ENCODE measurements at regions of chr14 and their contacts with region 1.

Region 1: GRCh38 chr14:91356181-91356763 is 61.3 kb downstream of the CCDC88C start:
- DNase-seq: peak; percentile 87
- H3K4me3 ChIP-seq: peak overlapping the region; percentile 67
- H3K27ac ChIP-seq: peak overlapping the region; percentile 94
- H3K4me1 ChIP-seq: peaks cover 100% of the 10 kb centered on the region
- CTCF ChIP-seq: no peak

Region 2: DNA sequence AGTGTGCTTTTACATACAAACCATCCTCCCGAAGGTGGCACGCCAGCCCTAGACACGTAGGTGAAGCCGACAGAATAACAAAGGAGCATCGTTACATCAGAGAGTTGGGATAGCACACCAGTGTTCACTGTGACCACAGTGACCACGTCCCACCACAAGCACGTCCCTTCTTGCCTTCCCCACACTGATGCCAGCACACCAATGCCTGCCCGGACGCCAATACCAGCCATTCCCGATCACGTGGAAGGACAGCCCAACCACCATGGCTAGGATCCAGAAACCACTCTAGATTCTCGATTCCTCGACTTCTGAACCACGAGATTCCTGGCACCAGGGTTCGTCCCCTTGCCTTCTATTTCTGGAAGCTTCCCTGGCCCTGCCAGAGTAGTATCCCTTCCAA is 63.8 kb before region 1 on chr14:
- CTCF ChIA-PET with region 1: no interaction called
- POLR2A ChIA-PET with region 1: no interaction called
- intact Hi-C with region 1: no loop called
- DNase-seq: no peak
- H3K4me3 ChIP-seq: no peak overlapping the region
- H3K27ac ChIP-seq: no peak overlapping the region
- H3K4me1 ChIP-seq: no peaks in the 10 kb centered on the region
- CTCF ChIP-seq: no peak

Region 3: GRCh38 chr14:91323671-91324605 is 32.3 kb before region 1 on chr14:
- CTCF ChIA-PET with region 1: interaction called, 6 read pairs
- POLR2A ChIA-PET with region 1: interaction called, 13 read pairs
- intact Hi-C with region 1: loop called (anchors 1 kb)
- DNase-seq: peak; percentile 88
- H3K4me3 ChIP-seq: peak overlapping the region; percentile 53
- H3K27ac ChIP-seq: peak overlapping the region; percentile 92
- H3K4me1 ChIP-seq: peaks cover 58% of the 10 kb centered on the region
- CTCF ChIP-seq: peak; percentile 100

Region 4: DNA sequence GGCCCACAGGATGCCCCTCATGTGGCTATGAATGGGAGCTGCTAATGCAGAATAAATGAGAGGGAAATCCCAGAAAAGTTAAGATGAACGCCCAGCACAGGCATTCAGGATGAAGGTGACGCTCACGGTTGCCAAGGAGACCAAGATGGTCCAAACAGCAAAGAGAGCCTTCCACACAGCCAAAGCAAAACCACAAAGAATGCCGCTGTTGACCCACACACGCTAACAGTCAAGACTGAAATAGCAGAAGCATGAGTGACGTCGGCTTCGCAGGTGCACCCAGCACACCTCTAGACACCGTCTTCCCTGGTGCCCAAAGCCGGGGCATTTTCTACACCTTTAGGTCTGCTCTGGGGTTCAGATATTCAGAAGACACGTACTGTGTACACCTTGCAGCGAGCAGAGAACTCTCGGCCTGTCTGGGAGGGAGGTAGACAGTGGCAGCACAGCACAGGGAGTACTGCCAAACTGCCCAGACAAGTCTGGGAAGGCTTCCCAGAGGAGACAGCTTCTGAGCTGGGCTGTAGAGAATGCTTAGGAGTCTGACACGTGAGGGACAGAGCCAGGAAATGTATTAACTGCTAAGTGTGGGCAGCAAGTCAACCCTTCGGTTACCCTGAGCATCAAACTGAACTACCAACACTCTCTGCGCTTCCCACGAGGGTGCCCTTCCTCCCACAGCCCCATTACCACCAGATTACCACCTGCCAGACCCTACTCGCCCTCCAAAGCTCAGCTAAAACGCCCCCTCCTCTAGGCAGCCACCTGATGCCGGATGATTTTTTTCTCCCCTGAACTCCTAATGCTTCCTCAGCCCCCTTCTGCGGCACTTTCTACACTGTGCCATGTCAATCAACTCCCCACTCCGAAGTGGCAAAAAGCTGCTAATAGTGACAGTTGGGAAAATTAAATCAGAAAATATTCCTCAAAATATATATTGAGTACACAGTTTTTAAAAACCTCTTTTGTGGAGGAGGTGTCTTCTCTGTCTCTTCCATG is 11.2 kb after region 1 on chr14:
- CTCF ChIA-PET with region 1: interaction called, 16 read pairs
- POLR2A ChIA-PET with region 1: interaction called, 311 read pairs
- intact Hi-C with region 1: loop called (anchors 1 kb)
- DNase-seq: peak; percentile 94
- H3K4me3 ChIP-seq: peak overlapping the region; percentile 53
- H3K27ac ChIP-seq: peak overlapping the region; percentile 94
- H3K4me1 ChIP-seq: peaks cover 100% of the 10 kb centered on the region
- CTCF ChIP-seq: no peak

Region 5: GRCh38 chr14:91388551-91388975 is 32.3 kb after region 1 on chr14:
- CTCF ChIA-PET with region 1: interaction called, 3 read pairs
- POLR2A ChIA-PET with region 1: interaction called, 15 read pairs
- intact Hi-C with region 1: no loop called
- DNase-seq: no peak
- H3K4me3 ChIP-seq: no peak overlapping the region
- H3K27ac ChIP-seq: peak overlapping the region; percentile 49
- H3K4me1 ChIP-seq: peaks cover 96% of the 10 kb centered on the region
- CTCF ChIP-seq: no peak

Region 6: GRCh38 chr14:91396959-91397815 is 40.9 kb after region 1 on chr14:
- CTCF ChIA-PET with region 1: interaction called, 4 read pairs
- POLR2A ChIA-PET with region 1: interaction called, 28 read pairs
- intact Hi-C with region 1: no loop called
- DNase-seq: peak; percentile 87
- H3K4me3 ChIP-seq: peak overlapping the region; percentile 63
- H3K27ac ChIP-seq: peak overlapping the region; percentile 89
- H3K4me1 ChIP-seq: peaks cover 94% of the 10 kb centered on the region
- CTCF ChIP-seq: no peak